Activated CD4-positive, alpha-beta memory T cell treated with anti-CD3 and anti-CD28 coated beads for 36 hours (primary cell): ENCODE measurements at regions of chr2 and their contacts with region 1.

Region 1: DNA sequence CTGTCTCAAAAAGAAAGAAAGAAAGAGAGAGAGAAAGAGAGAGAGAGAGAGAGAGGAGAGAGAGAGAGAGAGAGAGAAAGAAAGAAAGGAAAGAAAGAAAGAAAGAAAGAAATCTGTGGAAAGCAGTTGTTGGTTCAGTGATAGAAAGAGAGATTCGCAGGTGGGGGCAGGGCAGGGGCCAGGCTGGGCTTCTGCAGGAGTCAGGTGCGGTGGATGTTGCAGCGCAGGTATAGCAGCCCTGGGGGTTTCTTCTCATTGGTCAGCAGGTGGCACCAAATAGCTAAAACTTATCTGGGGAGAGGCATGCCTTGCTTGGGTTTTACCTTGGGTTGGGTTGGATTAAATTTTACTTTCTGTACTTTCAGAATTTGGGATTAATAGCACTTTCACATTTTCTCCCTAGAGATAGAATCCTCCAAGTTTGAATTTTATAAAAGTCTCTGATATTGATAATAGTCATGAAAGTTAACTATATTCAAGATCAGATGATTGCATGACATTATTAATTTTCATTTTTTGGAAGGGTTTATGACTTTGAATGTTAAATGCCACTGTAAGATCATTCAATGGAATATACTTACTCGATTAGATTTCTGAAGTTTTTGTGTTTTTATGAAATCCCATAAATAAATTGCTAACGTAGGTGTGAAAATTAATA is 66.6 kb downstream of the SPTBN1 start:
- DNase-seq: peak; percentile 64
- H3K4me3 Mint-ChIP-seq: no peak overlapping the region
- H3K27ac Mint-ChIP-seq: no peak overlapping the region
- H3K4me1 Mint-ChIP-seq: peaks cover 13% of the 10 kb centered on the region
- H3K27me3 Mint-ChIP-seq: no peaks in the 10 kb centered on the region

Region 2: DNA sequence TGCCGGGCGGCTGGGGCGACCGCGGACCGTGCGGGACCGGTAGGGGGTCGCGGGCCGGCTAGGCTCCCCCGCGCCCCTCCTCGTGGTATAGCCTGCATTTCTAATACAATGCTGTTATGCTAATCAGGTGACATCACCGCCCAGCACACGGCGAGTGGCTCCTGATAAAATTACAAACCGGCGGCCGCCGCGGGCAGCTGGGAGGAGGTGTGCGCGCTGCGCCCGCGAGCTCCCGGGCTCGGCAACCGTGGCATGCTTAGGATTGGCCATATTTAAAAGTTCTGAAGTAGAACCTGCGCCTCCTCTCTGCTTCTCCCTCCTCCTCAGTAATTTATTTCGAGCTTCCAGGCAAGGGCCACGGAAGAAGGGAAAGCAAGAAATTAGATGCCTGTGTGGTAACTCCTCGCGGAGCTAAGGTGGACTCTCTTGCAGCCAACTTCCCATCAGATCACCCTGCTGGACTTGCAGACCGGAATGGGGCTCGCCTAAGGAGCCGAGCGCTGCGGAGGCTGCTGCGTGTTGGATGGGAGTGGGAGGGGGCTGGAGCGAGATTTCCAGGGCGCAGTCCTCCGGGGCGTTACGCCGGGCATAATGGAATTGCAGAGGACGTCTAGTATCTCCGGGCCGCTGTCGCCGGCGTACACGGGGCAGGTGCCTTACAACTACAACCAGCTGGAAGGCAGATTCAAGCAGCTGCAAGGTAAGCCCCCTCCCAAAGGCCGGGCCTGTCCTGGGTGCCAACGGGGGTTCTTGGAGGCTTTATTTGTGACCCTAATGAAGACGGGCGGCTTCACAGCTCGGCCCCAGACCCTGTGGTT is 35.6 kb after region 1 on chr2:
- CTCF ChIA-PET with region 1: interaction called, 26 read pairs
- POLR2A ChIA-PET with region 1: no interaction called
- intact Hi-C with region 1: loop called (anchors 1 kb)
- DNase-seq: peak; percentile 85
- H3K4me3 Mint-ChIP-seq: peak overlapping the region; percentile 83
- H3K27ac Mint-ChIP-seq: peak overlapping the region; percentile 89
- H3K4me1 Mint-ChIP-seq: peaks cover 42% of the 10 kb centered on the region
- H3K27me3 Mint-ChIP-seq: no peaks in the 10 kb centered on the region

Region 3: DNA sequence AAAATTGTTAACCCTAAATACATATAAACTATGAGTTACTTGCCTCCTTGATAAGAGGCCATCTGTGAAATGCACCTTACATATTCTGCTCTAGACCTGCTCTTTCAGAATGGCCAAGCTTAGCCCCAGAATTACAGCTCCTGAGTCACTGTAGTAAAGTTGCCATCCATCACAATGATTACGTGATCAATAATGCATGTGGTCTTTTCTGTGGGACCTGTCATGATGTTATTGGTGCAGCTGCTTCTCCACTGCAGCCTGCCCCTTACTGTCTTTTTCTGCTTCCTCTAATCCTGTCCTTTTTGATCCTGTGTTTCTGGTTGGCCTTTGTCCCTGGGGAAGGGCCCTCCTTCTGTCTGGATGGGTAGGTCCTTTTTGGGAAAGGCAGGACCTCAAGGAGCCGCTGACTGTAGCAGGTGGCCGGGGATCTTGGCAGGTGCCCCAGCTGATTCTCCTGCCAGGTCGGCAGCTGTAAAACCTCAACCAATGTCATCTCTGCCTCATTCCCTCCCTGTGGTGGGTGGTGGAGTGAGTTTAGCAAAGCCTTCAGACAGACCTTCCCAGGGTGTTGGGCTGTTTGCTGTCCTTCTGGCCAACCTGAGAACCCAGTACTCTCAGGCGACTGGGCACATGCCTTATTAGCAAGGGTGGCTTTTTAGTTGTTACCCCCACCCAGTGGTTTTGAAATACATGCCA is 74.5 kb after region 1 on chr2:
- CTCF ChIA-PET with region 1: interaction called, 6 read pairs
- POLR2A ChIA-PET with region 1: no interaction called
- intact Hi-C with region 1: loop called (anchors 5 kb)
- DNase-seq: peak; percentile 50
- H3K4me3 Mint-ChIP-seq: peak overlapping the region; percentile 39
- H3K27ac Mint-ChIP-seq: peak overlapping the region; percentile 91
- H3K4me1 Mint-ChIP-seq: peaks cover 84% of the 10 kb centered on the region
- H3K27me3 Mint-ChIP-seq: no peaks in the 10 kb centered on the region

Region 4: DNA sequence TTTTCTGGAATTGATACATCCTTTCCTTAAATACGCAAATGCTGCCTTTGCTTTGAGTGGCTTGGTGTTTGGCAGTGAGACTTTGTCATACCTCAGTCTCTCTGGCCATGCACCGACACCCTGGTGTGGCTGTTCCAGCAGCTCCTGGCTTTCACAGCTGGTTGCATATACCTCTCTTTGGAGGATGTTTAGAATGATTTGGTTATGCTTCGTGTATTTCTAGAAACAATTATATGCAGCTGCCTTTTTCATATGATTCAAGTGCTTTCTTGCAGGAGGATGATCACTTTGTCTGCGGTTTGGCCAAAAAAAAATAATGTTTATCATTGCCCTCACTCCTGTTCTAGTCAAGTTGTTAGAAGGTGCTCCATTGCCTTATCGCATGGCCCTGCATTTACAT is 105.7 kb after region 1 on chr2:
- CTCF ChIA-PET with region 1: no interaction called
- POLR2A ChIA-PET with region 1: no interaction called
- intact Hi-C with region 1: no loop called
- DNase-seq: no peak
- H3K4me3 Mint-ChIP-seq: no peak overlapping the region
- H3K27ac Mint-ChIP-seq: no peak overlapping the region
- H3K4me1 Mint-ChIP-seq: peaks cover 3% of the 10 kb centered on the region
- H3K27me3 Mint-ChIP-seq: no peaks in the 10 kb centered on the region

Region 5: GRCh38 chr2:54665436-54665856 is 142.7 kb after region 1 on chr2:
- CTCF ChIA-PET with region 1: interaction called, 55 read pairs
- POLR2A ChIA-PET with region 1: no interaction called
- intact Hi-C with region 1: loop called (anchors 1 kb)
- DNase-seq: peak; percentile 53
- H3K4me3 Mint-ChIP-seq: no peak overlapping the region
- H3K27ac Mint-ChIP-seq: no peak overlapping the region
- H3K4me1 Mint-ChIP-seq: peaks cover 2% of the 10 kb centered on the region
- H3K27me3 Mint-ChIP-seq: no peaks in the 10 kb centered on the region

Region 6: DNA sequence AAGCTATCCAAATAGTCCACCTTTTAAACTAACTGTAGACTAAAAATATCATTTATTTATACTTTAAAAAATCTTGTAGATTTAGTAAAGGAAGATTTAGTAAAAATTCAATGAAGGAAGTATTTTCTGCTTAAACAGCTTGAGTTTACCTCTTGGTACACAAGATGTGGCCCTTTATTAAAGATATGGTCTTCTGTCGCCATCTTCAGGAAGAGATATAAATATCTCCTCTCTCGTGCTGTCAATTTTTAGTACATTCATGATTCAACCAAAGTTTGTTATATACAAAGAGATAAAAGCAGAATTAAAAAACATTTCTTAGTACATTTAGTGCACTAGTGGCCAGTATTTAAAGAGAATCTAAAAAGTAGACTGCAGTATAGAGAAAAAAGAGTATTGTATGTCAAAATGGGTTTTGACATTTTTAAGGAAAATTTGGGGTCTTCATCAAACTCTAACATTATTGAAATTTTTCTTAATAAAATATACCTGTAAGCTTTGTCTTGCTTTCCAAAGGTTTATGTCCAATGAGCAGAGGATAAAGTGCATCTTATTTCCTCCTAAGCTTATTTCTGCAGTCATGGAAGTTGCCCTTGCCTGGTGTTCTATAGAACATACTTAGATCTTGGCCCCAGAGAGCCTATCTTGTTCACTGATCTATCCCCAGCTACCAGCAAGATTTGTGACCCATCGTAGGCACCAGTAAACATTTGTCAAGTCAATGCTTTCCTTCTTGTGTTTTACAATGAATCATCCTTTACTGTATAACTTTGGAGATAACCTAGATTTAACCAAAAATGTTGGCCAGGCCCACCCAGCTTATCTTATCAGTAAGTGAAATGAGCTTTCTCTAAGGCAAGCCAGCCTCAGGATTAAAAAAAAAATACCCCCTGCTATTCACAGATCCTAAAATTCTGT is 182.2 kb after region 1 on chr2:
- CTCF ChIA-PET with region 1: interaction called, 149 read pairs
- POLR2A ChIA-PET with region 1: interaction called, 5 read pairs
- intact Hi-C with region 1: loop called (anchors 1 kb)
- DNase-seq: no peak
- H3K4me3 Mint-ChIP-seq: no peak overlapping the region
- H3K27ac Mint-ChIP-seq: no peak overlapping the region
- H3K4me1 Mint-ChIP-seq: peaks cover 6% of the 10 kb centered on the region
- H3K27me3 Mint-ChIP-seq: peaks cover 19% of the 10 kb centered on the region

Region 7: DNA sequence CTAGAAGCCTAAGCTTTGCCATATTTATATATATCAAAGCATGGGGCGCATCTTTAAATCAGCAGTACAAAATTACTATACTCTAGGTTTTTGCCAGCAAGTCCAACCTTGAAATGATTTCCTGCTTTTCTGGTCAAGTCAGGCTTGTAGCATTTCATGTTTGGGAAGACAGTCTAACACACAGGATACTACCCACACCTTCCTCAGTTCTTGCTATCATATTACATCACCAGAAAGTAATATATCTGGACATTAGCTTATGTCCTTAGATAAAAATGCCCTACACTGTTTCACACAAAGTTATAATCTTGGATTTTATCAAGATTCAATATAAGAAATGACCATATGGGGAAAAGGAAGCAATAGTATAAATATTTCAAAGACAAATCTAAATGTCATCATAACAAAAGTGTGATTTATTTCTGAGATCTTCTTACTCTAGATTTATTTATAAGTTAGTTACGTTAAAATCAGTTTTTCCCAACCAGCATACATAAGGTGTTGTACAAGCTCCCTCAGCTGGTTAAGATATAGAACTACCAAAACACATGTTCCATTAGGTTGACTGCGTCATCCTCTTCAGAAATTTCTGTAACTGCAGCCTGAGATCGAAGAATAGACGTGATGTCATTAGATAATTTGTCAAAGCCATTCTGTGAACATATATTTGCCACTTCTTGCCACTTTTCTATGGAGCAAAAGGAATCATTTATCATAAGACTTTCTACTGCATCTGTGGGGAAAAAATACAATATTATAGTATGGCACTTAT is 652.7 kb after region 1 on chr2:
- CTCF ChIA-PET with region 1: interaction called, 4 read pairs
- POLR2A ChIA-PET with region 1: no interaction called
- intact Hi-C with region 1: loop called (anchors 10 kb)
- DNase-seq: no peak
- H3K4me3 Mint-ChIP-seq: no peak overlapping the region
- H3K27ac Mint-ChIP-seq: no peak overlapping the region
- H3K4me1 Mint-ChIP-seq: peaks cover 10% of the 10 kb centered on the region
- H3K27me3 Mint-ChIP-seq: no peaks in the 10 kb centered on the region